ENCODE measurements at regions of chr4 and their contacts with region 1.

Region 1: GRCh38 chr4:183398227-183399125 is 46.0 kb upstream of the CDKN2AIP start:
- H3K4me3 Mint-ChIP-seq: peak overlapping the region; percentile 82
- H3K27ac Mint-ChIP-seq: peak overlapping the region; percentile 97
- H3K4me1 Mint-ChIP-seq: peaks cover 42% of the 10 kb centered on the region
- H3K27me3 Mint-ChIP-seq: peaks cover 10% of the 10 kb centered on the region

Region 2: DNA sequence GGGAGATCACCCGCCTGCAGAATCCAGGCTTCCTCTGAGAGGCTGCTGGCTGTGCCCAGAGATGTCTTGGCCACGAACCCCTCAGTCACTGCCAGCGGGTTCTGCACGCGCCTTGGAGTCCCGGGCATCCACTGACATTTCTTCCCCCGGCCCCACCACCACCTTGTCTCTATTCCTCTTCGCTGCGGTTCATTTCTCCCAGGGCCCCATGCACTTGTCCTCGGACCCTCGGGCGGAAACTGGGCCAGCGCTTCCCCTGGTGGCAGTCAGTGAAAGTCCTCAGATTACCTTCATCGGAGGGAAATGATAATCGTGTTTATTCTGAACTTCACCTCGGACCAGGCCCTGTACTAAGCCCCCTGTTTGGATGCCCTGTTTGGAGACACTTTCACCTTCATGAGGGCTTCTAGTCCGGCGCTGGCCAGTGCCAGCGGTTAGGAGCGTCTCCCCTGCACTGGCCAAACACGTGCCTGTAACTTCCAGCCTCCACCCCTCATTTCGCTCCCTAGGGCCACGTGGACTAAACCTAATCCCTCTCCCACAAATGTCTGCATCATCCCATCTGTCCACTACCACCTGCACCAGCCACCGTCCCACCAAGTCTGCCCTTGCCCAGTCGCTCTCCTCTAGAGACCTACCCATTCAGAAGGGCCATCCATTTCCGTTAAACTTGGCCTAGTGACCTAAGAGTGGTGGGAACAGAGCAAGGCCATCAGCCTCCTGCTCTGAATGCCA is 563.3 kb before region 1 on chr4:
- intact Hi-C with region 1: no loop called
- H3K4me3 Mint-ChIP-seq: no peak overlapping the region
- H3K27ac Mint-ChIP-seq: no peak overlapping the region
- H3K4me1 Mint-ChIP-seq: no peaks in the 10 kb centered on the region
- H3K27me3 Mint-ChIP-seq: peaks cover 5% of the 10 kb centered on the region

Region 3: DNA sequence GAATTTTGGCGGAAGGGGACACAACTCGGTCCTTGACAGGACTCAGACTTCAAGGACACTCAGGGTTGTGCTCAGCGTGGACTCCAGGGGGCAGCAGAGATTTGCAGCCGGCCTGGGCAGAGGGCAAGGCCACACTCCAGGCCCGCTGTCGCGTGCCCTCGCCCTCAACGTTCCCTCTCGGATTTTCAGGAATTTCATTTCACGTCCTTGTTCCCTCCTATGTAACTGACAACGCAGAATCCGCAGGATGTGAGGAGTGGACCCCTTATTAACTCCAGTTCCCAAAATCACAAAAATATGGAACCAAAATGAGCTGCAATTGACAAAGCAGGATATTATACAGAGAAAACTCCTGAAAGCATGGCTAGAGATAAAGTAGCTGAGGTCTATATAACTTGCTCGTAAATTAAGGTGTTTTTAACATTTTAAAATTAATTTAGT is 460.3 kb before region 1 on chr4:
- intact Hi-C with region 1: loop called (anchors 10 kb)
- H3K4me3 Mint-ChIP-seq: no peak overlapping the region
- H3K27ac Mint-ChIP-seq: no peak overlapping the region
- H3K4me1 Mint-ChIP-seq: no peaks in the 10 kb centered on the region
- H3K27me3 Mint-ChIP-seq: peaks cover 18% of the 10 kb centered on the region

Region 4: DNA sequence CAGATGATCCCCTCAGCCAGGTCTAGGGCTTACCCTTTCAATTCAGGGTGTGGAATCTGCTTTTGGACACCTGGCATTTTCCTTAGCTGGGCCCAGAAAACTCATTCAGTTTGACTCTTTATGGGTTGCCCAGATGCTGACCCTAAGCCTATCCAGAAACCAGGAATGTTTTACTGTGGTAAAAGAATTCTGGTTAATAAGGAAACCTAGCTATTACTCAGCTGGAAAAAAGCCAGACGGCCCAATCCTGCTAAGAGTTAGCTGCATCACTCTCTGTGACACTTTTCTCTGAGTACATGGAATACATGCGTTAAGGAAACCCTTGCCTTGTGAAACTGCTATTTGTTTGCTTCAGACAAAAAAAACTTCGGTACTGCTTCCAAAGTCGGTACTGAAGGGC is 134.3 kb after region 1 on chr4:
- intact Hi-C with region 1: no loop called
- H3K4me3 Mint-ChIP-seq: no peak overlapping the region
- H3K27ac Mint-ChIP-seq: no peak overlapping the region
- H3K4me1 Mint-ChIP-seq: no peaks in the 10 kb centered on the region
- H3K27me3 Mint-ChIP-seq: peaks cover 6% of the 10 kb centered on the region